ENCODE measurements at regions of chr10 and their contacts with region 1.

Region 1: DNA sequence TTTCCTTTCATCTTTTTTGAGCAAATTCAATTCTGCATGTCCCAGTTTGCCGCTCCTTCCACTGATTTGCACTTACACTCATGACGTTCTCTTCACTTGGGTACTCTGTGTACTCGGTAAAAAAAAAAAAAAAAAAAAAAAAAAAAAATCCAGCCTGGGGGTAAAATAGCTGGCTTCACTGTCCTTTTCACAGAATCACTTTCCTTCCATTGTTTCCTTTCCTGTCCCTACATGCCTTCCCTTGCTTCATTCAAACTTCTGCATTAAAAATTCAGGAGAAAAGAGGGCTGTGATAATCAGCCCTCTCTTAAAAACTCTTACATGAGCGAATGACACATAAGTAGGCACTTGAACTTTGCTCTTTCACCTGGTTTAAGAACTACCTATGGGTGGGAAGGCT is 8.7 kb downstream of the ANKRD1 start:
- DNase-seq: peak; percentile 61
- H3K4me3 Mint-ChIP-seq: peak overlapping the region; percentile 31
- H3K27ac Mint-ChIP-seq: peak overlapping the region; percentile 83
- H3K4me1 Mint-ChIP-seq: peaks cover 16% of the 10 kb centered on the region
- H3K27me3 Mint-ChIP-seq: no peaks in the 10 kb centered on the region
- CTCF ChIP-seq: no peak

Region 2: DNA sequence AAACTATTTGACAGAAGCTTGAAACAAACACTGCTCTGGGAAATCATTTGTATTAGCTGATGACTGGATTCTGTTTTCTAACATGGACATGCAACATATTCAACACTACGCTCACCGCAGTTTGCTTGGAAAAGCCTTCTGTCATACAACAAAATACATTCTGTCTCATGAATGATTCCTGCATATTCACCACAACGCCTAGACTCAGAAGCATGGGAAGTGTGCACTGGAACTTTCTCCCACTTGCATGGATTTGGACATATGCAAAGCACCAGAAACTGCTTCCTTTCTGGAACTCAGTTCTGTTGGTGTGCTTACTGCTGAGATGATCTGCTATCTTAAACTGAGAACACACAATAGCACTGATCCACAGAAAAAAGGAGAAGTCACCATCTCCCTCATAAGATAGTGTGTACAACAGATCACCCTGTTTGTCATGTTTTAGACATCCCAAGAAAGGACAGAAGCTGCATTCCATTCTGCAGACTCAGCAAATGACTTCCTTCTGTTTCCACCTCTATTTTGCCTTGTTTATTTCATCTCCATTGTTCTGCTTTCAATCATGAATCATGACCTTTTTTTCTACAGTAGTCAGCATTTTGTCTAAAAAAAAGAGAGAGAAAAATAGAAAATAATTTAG is 170.1 kb before region 1 on chr10:
- CTCF ChIA-PET with region 1: no interaction called
- POLR2A ChIA-PET with region 1: no interaction called
- intact Hi-C with region 1: no loop called
- DNase-seq: peak; percentile 25
- H3K4me3 Mint-ChIP-seq: no peak overlapping the region
- H3K27ac Mint-ChIP-seq: no peak overlapping the region
- H3K4me1 Mint-ChIP-seq: peaks cover 18% of the 10 kb centered on the region
- H3K27me3 Mint-ChIP-seq: no peaks in the 10 kb centered on the region
- CTCF ChIP-seq: no peak

Region 3: GRCh38 chr10:90884416-90884815 is 27.8 kb before region 1 on chr10:
- CTCF ChIA-PET with region 1: interaction called, 10 read pairs
- POLR2A ChIA-PET with region 1: interaction called, 4 read pairs
- intact Hi-C with region 1: no loop called
- DNase-seq: no peak
- H3K4me3 Mint-ChIP-seq: no peak overlapping the region
- H3K27ac Mint-ChIP-seq: peak overlapping the region; percentile 42
- H3K4me1 Mint-ChIP-seq: no peaks in the 10 kb centered on the region
- H3K27me3 Mint-ChIP-seq: no peaks in the 10 kb centered on the region
- CTCF ChIP-seq: no peak

Region 4: GRCh38 chr10:90930070-90930837 is 18.1 kb after region 1 on chr10:
- CTCF ChIA-PET with region 1: interaction called, 11 read pairs
- POLR2A ChIA-PET with region 1: interaction called, 4 read pairs
- intact Hi-C with region 1: no loop called
- DNase-seq: peak; percentile 71
- H3K4me3 Mint-ChIP-seq: no peak overlapping the region
- H3K27ac Mint-ChIP-seq: peak overlapping the region; percentile 50
- H3K4me1 Mint-ChIP-seq: peaks cover 28% of the 10 kb centered on the region
- H3K27me3 Mint-ChIP-seq: no peaks in the 10 kb centered on the region
- CTCF ChIP-seq: no peak

Region 5: DNA sequence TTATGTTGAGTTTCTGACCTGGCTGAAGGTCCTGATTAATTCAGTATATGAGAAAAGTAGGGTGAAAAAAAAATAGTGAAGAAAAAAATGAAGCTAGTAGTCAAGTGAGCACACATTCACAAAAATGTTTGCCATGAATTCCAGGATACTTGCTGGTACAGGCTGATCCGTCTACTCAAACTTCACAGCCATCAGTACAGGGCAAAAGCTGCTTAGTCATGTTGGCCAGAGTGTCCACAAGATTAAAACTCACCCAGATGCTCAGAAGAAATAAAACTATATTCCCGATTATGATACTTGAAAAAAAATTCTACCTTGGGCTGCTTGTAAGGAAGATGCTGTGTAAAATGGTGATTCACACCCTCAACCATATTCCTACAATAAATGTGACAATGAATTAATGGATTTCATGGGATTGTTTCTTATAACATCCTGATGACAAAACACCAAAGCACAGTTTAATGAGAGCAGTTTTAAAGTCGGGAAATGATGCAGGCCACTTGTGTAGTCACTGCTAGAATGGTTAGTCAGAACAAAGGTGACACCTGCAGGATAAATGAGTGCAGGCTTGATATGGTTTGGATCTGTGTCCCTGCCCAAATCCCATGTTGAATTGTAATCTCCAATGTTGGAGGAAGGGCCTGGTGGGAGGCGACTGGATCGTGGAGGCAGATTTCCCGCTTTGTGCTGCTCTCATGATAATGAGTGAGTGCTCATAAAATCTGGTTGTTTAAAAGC is 57.9 kb after region 1 on chr10:
- CTCF ChIA-PET with region 1: interaction called, 17 read pairs
- POLR2A ChIA-PET with region 1: interaction called, 13 read pairs
- intact Hi-C with region 1: loop called (anchors 1 kb)
- DNase-seq: peak; percentile 60
- H3K4me3 Mint-ChIP-seq: no peak overlapping the region
- H3K27ac Mint-ChIP-seq: peak overlapping the region; percentile 57
- H3K4me1 Mint-ChIP-seq: peaks cover 22% of the 10 kb centered on the region
- H3K27me3 Mint-ChIP-seq: no peaks in the 10 kb centered on the region
- CTCF ChIP-seq: no peak

Region 6: DNA sequence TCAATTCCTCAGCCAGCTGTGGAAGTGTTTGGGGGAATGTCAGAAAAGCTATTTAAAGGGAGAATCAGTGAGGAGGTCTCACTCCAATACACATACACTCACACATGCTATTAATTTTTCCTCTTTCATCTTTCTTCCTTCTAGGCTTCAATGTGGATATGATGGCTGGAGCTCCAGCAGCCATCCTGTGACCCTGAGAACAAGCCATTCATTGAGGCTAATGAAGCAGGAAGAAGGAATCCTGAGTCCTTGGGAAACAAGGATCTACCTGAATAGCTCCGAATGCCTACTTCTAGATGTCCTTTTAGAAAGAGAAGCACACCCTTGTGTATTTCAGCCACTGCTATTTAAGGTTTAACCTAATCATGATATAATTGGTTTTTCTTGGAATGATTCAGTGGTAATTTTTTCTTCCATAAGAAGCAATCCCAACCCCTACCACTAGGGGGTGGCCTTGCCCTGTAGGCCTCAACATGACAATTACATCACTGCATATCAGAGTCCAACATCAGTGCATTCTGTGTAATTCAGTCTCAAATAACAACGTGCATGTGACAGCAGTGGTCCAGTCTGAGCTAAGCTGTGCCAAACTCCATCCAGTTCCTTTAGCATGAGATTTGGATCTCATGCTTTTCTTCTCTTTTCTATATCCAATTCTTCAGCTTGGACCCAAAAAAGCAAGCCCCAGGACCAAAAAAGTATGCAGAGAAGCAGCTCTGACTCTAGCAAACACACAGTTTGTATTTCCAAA is 94.0 kb after region 1 on chr10:
- CTCF ChIA-PET with region 1: interaction called, 15 read pairs
- POLR2A ChIA-PET with region 1: interaction called, 4 read pairs
- intact Hi-C with region 1: no loop called
- DNase-seq: peak; percentile 73
- H3K4me3 Mint-ChIP-seq: no peak overlapping the region
- H3K27ac Mint-ChIP-seq: no peak overlapping the region
- H3K4me1 Mint-ChIP-seq: no peaks in the 10 kb centered on the region
- H3K27me3 Mint-ChIP-seq: no peaks in the 10 kb centered on the region
- CTCF ChIP-seq: peak; percentile 80

Region 7: DNA sequence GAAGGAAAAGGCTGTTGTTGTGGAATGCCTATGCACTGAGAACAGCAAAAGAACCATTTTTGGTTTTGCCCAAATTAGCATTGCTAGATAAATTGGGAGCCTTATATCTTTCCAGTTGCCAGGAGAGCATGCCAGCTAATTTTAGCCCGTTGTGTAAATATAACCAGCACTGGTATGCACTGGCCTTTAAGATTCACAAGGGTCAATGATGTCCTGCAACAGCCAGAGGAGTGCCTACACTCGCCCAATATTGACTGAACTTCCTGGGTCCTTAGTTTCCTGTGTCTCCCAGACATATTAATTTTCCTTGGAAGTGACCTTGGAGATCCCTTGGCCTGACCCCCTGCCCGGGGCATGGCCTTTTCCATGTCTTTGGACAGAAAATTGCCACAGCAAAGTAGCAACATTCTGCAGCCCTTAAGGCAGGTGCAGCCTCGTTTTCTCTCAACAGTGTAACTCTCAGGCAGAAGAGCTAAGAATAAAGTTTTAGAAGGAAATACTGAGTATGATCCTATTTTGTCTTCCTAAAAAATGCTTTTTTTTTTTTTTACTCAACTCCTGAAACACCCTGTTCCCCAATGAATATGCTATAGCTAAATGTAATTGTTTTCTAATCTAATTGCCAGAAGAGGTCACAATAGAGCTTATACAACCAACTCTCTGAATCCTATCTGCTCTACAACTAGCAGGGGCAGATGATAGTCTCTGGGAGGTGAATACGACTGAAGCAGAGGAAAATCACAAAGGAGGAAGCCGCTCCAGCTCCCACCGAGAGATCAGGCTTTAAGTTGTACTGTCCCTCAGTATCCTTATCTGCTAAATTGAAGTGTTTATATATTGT is 176.3 kb after region 1 on chr10:
- CTCF ChIA-PET with region 1: interaction called, 14 read pairs
- POLR2A ChIA-PET with region 1: interaction called, 3 read pairs
- intact Hi-C with region 1: no loop called
- DNase-seq: peak; percentile 27
- H3K4me3 Mint-ChIP-seq: no peak overlapping the region
- H3K27ac Mint-ChIP-seq: no peak overlapping the region
- H3K4me1 Mint-ChIP-seq: peaks cover 5% of the 10 kb centered on the region
- H3K27me3 Mint-ChIP-seq: no peaks in the 10 kb centered on the region
- CTCF ChIP-seq: peak; percentile 28

Region 8: DNA sequence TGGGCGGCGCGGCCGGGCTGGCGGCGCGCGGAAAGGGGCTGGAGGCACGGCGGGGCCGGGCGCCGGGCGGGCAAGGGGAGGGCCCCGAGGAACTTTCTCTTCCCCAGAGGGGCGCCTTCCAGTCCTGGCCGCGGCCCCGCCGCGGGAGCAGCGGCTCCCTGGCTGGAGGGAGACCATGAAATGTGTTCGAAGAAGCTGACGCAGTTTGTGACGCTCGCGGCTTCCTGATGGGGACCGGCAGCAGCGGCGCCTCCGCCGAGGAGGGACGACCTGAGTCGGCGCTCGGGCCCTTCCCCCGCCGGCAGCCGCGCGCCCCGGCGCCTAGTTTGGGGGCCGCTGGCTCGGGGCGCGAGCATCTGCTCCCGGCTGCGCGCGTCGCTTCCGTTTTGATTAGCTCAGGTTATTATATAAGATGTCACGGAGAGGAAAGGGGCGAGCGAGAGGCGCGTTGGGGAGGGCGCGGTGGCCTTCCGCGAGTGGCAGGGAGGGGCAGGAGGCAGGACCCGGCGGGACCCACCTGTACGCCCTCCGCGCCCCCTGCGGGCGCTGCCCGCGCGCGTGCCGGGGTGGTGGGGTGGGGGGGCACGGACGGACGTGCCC is 251.2 kb after region 1 on chr10:
- CTCF ChIA-PET with region 1: no interaction called
- POLR2A ChIA-PET with region 1: no interaction called
- intact Hi-C with region 1: loop called (anchors 2 kb)
- DNase-seq: peak; percentile 56
- H3K4me3 Mint-ChIP-seq: peak overlapping the region; percentile 80
- H3K27ac Mint-ChIP-seq: peak overlapping the region; percentile 64
- H3K4me1 Mint-ChIP-seq: peaks cover 13% of the 10 kb centered on the region
- H3K27me3 Mint-ChIP-seq: no peaks in the 10 kb centered on the region
- CTCF ChIP-seq: no peak